Gastrocnemius medialis (tissue), 4 donors: ENCODE measurements at regions of chr14 and their contacts with region 1.

Region 1: GRCh38 chr14:73503648-73504047 is 12.9 kb downstream of the RIOX1 start:
- DNase-seq: no peak
- ATAC-seq: no peak
- H3K4me3 ChIP-seq: no peak overlapping the region
- H3K27ac ChIP-seq: no peak overlapping the region
- H3K4me1 ChIP-seq: no peaks in the 10 kb centered on the region
- H3K27me3 ChIP-seq: no peaks in the 10 kb centered on the region
- CTCF ChIP-seq: no peak
- POLR2A ChIP-seq: no peak

Region 2: DNA sequence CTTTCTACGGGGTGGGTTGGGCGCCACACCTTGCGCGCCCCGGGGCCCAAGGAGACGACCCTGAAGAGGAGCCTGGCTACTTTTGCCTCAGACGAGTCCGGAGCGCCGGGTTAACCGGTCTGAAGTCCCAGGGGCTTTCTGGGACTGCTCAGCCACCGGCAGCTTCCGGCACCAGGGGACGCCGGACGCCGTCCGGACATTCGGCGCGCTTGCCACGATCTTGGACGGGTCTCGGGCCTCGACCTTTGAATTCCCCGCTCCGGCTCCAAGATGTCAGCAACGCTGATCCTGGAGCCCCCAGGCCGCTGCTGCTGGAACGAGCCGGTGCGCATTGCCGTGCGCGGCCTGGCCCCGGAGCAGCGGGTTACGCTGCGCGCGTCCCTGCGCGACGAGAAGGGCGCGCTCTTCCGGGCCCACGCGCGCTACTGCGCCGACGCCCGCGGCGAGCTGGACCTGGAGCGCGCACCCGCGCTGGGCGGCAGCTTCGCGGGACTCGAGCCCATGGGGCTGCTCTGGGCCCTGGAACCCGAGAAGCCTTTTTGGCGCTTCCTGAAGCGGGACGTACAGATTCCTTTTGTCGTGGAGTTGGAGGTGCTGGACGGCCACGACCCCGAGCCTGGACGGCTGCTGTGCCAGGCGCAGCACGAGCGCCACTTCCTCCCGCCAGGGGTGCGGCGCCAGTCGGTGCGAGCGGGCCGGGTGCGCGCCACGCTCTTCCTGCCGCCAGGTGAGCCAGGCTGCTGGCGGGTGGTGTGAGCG is 88.2 kb after region 1 on chr14 and contains the start of gene ACOT4:
- in situ Hi-C with region 1: no loop called
- intact Hi-C with region 1: no loop called
- DNase-seq: no peak
- ATAC-seq: peak; percentile 23 to 56
- H3K4me3 ChIP-seq: peak within 1 kb of the TSS; percentile 55 to 63 (median 58)
- H3K27ac ChIP-seq: peak within 1 kb of the TSS in 1 of 4 donors; percentile 32
- H3K4me1 ChIP-seq: no peaks in the 10 kb centered on the region
- H3K27me3 ChIP-seq: no peaks in the 10 kb centered on the region
- CTCF ChIP-seq: peak in 1 of 5 experiments; percentile 15
- POLR2A ChIP-seq: no peak
- total RNA-seq, gene ACOT4: 0.40 to 1.2 (median 0.75) TPM

Region 3: DNA sequence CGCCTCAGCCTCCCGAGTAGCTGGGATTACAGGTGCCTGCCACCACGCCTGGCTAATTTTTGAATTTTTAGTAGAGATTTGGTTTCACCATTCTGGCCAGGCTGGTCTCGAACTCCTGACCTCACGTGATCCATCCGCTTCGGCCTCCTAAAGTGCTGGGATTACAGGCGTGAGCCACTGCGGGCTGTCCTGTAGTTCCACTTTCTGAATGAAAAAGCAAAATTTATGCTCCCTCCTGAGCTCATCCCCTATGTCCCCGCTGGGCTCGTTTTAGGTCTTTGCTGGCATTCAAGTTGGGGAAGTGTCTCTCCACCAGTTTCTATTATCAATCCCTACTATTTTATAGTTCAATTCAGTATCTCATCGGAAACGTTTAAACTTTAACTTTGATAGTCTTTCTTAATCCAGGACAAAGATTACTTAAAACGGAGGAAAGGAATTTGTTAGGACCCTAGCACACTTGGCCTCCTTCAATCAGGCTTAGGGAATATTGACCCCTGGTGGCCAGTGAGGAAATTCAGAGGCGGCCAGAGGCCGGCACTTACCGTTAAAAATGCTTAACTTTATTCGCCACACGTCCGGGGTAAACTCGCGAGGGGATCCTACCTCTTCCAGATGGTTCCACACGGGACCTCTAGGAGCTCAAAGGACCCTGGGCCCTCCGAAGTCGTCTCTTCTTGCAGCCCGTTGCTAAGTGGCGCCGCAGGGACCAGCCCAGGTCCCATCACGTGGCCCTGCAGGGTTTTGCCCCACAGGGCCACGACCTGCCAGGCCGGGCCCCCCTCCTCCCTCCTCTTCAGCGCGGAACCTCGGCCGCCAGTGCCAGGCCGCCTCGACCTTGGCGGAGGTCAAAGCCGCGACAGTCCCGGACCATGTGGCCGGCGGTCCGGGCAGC is 129.7 kb after region 1 on chr14:
- in situ Hi-C with region 1: loop called (anchors 5 to 10 kb)
- intact Hi-C with region 1: no loop called
- DNase-seq: peak; percentile 24 to 65
- ATAC-seq: peak; percentile 81 to 82
- H3K4me3 ChIP-seq: peak overlapping the region; percentile 69 to 80 (median 71)
- H3K27ac ChIP-seq: peak overlapping the region; percentile 80 to 83 (median 82)
- H3K4me1 ChIP-seq: peaks cover 5 to 11% of the 10 kb centered on the region in 2 donors
- H3K27me3 ChIP-seq: no peaks in the 10 kb centered on the region
- CTCF ChIP-seq: peak; percentile 86 to 94 (median 88)
- POLR2A ChIP-seq: no peak

Region 4: GRCh38 chr14:73949744-73950734 is 446.4 kb after region 1 on chr14 and contains the starts of genes COQ6 and FAM161B:
- in situ Hi-C with region 1: no loop called
- intact Hi-C with region 1: no loop called
- DNase-seq: peak; percentile 94 to 95
- ATAC-seq: peak; percentile 98
- H3K4me3 ChIP-seq: peak within 1 kb of the TSS; percentile 68 to 97 (median 94)
- H3K27ac ChIP-seq: peak within 1 kb of the TSS; percentile 90 to 98 (median 93)
- H3K4me1 ChIP-seq: peaks cover 9 to 21% of the 10 kb centered on the region in 2 donors
- H3K27me3 ChIP-seq: no peaks in the 10 kb centered on the region
- CTCF ChIP-seq: peak in 3 of 5 experiments; percentile 8 to 20 (median 16)
- POLR2A ChIP-seq: peak; percentile 79
- total RNA-seq, gene COQ6: 36.5 to 60.6 (median 42.2) TPM
- total RNA-seq, gene FAM161B: 5.0 to 7.7 (median 6.0) TPM